ENCODE measurements at regions of chr9 and their contacts with region 1.

Region 1: DNA sequence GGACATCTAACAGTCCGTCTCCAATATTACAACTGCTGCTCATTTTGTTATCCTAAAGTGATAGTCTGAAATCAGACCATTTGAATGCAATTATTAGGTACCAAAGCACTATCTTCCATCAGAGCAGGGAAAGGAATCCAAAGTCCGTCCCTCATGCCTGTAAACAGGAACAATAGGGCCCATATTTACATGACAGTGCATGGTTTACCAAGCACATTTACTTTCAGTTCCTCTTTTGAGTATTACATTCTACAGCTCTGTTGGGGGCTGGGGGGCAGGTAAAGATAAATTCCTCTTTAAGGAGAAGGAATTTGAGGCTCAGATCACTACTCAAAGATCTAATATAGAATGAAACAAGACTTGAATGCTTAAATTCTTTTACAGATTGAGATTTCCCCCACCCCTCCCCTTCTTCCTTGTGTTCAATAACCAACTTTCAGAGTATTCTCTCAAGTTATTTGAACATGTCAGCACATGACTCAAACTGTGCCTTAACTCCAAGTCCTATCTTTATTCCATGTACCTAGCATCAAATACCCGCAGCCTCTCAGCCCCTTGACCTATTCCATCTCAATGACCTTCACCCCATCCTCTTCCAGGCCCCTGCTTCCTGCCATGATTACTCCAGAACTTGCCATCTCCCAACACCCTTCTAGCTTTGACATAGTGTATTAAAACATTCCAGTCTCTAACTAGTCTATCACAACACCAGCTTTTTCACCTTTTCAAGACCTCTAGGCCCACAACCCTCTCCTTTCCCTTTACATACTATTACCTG is 71.0 kb downstream of the BRINP1 start:
- DNase-seq: no peak
- ATAC-seq: no peak

Region 2: GRCh38 chr9:118961857-118962256 is 336.4 kb before region 1 on chr9:
- intact Hi-C with region 1: no loop called
- DNase-seq: no peak
- ATAC-seq: peak; percentile 93

Region 3: DNA sequence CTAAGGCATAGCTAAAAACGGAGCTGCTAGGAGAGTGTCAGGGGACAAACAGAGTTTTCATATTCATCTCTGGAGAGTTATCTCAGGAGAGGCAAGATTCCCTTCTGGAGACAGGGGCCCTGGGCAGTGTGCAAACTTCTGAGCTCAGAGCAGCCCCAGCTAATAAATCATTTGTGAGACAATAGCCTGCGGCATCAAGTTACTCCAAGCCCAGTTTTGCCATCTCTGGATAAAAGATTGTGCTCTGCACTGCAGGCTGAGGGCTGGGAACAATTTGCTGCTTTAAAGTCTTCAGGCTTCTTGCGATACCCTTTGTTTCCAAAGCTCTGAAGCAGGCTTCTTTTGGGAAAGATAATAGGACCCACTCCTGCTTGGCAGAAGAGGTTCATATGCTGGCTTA is 235.2 kb after region 1 on chr9:
- intact Hi-C with region 1: loop called (anchors 5 kb)
- DNase-seq: no peak
- ATAC-seq: no peak

Region 4: GRCh38 chr9:119639287-119639962 is 341.2 kb after region 1 on chr9:
- intact Hi-C with region 1: no loop called
- DNase-seq: no peak
- ATAC-seq: no peak

Region 5: DNA sequence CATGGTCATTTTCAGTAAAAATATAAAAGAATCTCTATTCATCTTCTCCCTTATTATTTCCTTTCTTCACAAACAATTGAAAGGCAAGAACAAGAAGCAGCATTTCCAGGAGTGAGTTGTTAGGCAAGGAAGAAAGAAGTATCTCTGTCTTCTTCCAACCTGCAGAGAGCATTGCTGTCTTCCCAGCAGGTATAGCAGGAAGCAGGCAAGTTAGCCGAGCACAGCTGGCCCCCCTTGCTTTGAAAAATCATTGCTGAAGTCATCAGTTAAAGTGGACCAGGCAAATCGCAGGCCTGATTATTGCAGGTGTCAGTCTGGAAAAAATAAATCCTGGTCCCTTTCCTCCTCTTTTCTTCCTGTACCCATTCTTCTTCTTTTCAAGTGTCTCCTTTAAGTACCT is 424.1 kb after region 1 on chr9:
- intact Hi-C with region 1: no loop called
- DNase-seq: no peak
- ATAC-seq: no peak